ENCODE measurements at regions of chr15 and their contacts with region 1.

Region 1: DNA sequence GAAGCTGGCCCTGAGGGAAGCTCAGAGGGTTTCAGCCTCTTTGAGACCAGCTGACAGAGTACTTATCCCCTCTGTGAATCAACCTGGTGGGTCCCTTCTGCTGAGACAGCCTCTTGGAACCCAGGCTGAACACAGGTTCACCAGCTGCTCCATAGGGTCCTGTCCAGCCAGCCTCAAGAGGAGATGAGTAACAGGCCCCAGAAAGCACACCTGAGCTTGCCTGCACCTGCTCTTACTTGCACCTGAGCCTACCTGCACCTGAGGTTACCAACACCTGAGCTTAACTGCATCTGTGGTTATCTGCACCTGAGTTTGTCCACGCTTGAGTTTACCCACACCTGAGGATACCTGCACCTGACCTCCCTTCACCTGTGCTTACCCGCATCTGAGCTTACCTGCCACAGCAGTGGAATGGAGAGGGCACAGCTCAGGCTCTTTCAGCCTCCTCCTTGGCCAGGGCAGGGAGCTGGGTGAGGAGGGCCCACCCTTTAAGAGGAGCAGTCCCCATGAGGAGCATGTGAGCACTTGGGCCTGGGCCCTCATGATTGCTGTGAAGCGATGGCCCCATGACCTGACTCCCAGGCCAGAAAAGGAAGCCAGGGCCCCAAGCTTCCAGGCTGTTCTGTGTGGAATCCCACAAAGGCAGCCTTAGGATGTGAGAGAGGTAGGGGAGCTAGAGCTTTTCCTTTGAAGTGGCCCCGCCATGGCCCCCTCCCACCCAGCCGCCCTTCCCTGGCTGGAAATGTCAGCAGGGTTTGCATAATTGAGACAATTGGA is at the start of gene TRPM1:
- DNase-seq: no peak
- ATAC-seq: no peak
- H3K4me3 ChIP-seq: no peak within 1 kb of the TSS
- H3K27ac ChIP-seq: no peak within 1 kb of the TSS
- H3K4me1 ChIP-seq: no peaks in the 10 kb centered on the region
- H3K27me3 ChIP-seq: no peaks in the 10 kb centered on the region
- CTCF ChIP-seq: no peak
- total RNA-seq, gene TRPM1: not detected

Region 2: DNA sequence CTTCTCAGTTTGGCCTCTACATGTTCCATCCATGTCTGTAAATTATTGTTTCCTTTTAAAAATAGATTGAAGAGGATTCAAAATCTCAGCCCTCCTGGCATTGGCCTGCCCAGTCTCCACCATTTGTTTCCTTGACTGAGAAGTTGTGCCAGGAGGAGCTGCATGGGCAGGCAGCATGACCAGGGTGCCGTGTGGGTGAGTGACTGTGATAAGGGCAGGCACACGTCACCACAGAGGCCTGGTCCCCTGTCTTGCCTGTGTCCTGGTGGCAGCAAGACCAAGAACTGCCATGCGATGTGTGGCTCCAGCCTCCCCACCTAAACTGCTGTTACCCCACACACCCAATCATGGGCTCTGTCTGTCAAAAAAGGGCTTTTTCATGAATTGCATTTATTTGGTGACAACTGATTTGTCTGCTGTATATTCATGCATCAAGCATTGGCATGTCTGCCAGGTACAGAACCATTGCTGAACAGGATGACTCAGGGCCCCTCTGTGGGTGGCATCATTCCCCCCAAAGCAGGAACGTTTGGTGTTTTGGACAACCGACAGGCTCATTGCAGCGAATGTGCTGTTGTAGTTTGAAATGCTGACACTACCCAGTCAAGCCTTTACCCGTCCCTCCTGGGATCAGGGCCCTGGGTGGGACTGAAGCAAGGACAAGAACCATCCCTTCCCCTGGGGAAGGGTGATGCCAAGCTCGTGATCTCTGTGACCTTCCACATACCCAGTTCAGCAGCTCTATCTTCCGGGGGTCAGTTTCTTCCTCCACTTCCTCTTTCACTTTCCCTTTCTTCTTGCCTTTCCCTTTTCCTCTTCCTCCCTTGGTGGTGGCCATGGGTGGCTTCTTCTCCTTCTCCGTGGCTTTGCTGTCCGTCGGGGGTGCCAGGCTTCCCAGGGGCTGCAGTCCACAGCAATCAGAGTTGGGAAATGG is 51.5 kb before region 1 on chr15:
- intact Hi-C with region 1: loop called in 1 of 2 experiments (anchors 5 kb)
- DNase-seq: no peak
- ATAC-seq: no peak
- H3K4me3 ChIP-seq: no peak overlapping the region
- H3K27ac ChIP-seq: no peak overlapping the region
- H3K4me1 ChIP-seq: no peaks in the 10 kb centered on the region
- H3K27me3 ChIP-seq: no peaks in the 10 kb centered on the region
- CTCF ChIP-seq: no peak

Region 3: GRCh38 chr15:31136016-31136415 is 34.6 kb after region 1 on chr15:
- intact Hi-C with region 1: no loop called
- DNase-seq: no peak
- ATAC-seq: no peak
- H3K4me3 ChIP-seq: no peak overlapping the region
- H3K27ac ChIP-seq: no peak overlapping the region
- H3K4me1 ChIP-seq: no peaks in the 10 kb centered on the region
- H3K27me3 ChIP-seq: no peaks in the 10 kb centered on the region
- CTCF ChIP-seq: no peak